ENCODE measurements at regions of chr2 and their contacts with region 1.

Region 1: DNA sequence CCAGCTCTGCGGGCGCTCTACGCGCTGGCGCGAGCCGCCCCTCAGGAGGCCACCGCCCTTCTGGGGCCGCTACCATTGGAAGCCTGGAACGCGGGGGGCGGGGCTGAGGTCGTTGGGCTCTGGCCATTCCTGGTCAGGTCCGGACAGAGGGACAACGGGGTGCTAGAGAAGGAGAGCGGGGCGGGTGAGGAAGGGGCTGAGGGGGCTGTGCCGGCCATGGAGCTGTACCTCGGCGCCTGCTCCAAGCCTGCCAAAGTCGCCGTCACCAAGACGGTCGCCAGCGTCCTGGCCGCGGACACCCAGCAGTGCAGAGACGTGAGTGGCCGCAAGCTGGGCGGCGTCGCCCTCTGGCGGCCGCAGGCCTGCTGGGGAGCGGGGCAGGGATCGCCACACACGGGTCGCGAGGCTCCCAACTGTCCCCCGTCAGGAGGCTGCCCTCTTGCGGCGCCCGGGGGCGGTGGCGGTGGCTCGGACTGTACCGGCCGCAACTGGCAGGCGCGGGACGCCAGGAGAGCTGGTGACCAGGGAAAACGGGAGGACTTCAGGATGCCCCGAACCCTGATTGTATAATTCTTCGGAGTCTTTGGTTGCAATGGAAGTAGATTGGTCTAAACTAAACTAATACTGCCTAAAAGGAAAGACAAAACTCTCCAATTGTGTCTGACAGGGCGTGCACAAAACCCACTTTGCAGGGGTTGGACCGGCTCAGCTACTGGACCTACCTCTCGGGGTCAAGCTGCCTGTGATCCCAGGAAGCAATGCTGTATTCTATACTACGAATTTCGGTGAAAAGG is at the start of gene FSIP2:
- DNase-seq: peak; percentile 84
- H3K4me3 ChIP-seq: peak within 1 kb of the TSS; percentile 55
- H3K27ac ChIP-seq: no peak within 1 kb of the TSS
- H3K4me1 ChIP-seq: no peaks in the 10 kb centered on the region
- H3K27me3 ChIP-seq: no peaks in the 10 kb centered on the region
- CTCF ChIP-seq: peak; percentile 98
- total RNA-seq, gene FSIP2: 0.15 and 0.21 TPM in 2 replicates

Region 2: GRCh38 chr2:184599872-184600222 is 1139.0 kb before region 1 on chr2:
- CTCF ChIA-PET with region 1: no interaction called
- POLR2A ChIA-PET with region 1: no interaction called
- intact Hi-C with region 1: loop called (anchors 10 kb)
- DNase-seq: no peak
- H3K4me3 ChIP-seq: peak overlapping the region; percentile 74
- H3K27ac ChIP-seq: peak overlapping the region; percentile 37
- H3K4me1 ChIP-seq: peaks cover 34% of the 10 kb centered on the region
- H3K27me3 ChIP-seq: no peaks in the 10 kb centered on the region
- CTCF ChIP-seq: no peak

Region 3: DNA sequence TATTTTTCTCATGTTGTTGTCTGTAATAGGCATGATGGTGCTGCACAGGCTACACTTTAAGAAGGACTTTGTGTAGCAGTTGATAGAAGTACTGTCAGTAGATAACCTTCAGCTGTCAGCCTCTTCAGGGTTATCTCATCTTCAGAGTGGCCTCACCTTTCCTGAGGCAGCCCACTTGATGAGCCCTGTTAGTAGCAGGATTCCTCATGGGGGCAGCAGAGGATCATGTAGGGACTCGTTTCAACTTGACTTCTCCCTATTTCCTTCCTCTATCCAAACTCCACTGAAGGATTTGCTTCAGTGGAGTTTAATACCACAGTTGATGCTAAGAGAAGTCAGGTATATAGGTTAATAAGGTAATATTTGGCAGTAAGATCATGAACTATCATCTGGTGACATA is 530.6 kb before region 1 on chr2:
- CTCF ChIA-PET with region 1: interaction called, 3 read pairs
- POLR2A ChIA-PET with region 1: no interaction called
- intact Hi-C with region 1: loop called (anchors 2 kb)
- DNase-seq: peak; percentile 62
- H3K4me3 ChIP-seq: no peak overlapping the region
- H3K27ac ChIP-seq: no peak overlapping the region
- H3K4me1 ChIP-seq: no peaks in the 10 kb centered on the region
- H3K27me3 ChIP-seq: no peaks in the 10 kb centered on the region
- CTCF ChIP-seq: peak; percentile 66

Region 4: DNA sequence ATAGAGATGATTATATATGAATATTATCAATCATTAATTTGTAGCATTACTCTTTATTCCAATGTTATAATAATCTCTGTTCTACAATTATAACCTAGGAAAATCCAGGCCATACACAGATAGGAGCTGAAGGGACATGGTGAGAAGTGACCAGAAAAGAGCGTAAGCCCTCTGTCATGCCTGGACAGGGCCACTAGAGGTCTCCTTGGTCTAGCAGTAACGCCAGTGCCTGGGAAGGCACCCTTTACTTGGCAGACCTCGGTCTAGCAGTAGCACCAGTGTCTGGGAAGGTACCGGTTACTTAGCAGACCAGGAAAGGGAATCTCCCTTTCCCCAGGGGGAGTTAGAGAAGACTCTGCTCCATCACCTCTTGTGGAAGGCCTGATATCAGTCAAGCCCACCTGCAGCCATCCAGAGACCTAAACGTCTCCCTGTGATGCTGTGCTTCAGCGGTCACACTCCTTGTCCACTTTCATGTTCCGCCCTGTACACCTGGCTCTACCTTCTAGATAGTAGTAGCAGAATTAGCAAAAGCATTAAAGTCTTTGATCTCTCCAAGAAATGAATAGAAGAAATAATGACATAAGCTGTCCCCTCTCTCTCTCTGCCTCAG is 447.7 kb before region 1 on chr2:
- CTCF ChIA-PET with region 1: interaction called, 4 read pairs
- POLR2A ChIA-PET with region 1: no interaction called
- intact Hi-C with region 1: loop called (anchors 2 kb)
- DNase-seq: peak; percentile 64
- H3K4me3 ChIP-seq: no peak overlapping the region
- H3K27ac ChIP-seq: no peak overlapping the region
- H3K4me1 ChIP-seq: no peaks in the 10 kb centered on the region
- H3K27me3 ChIP-seq: no peaks in the 10 kb centered on the region
- CTCF ChIP-seq: peak; percentile 74

Region 5: GRCh38 chr2:185522472-185522871 is 216.4 kb before region 1 on chr2:
- CTCF ChIA-PET with region 1: no interaction called
- POLR2A ChIA-PET with region 1: no interaction called
- intact Hi-C with region 1: loop called (anchors 5 kb)
- DNase-seq: peak; percentile 9
- H3K4me3 ChIP-seq: no peak overlapping the region
- H3K27ac ChIP-seq: no peak overlapping the region
- H3K4me1 ChIP-seq: no peaks in the 10 kb centered on the region
- H3K27me3 ChIP-seq: no peaks in the 10 kb centered on the region
- CTCF ChIP-seq: peak; percentile 36; the same call in 1 of the 2 replicates

Region 6: GRCh38 chr2:186256540-186256939 is 517.7 kb after region 1 on chr2:
- CTCF ChIA-PET with region 1: no interaction called
- POLR2A ChIA-PET with region 1: no interaction called
- intact Hi-C with region 1: loop called (anchors 5 kb)
- DNase-seq: peak; percentile 66
- H3K4me3 ChIP-seq: no peak overlapping the region
- H3K27ac ChIP-seq: no peak overlapping the region
- H3K4me1 ChIP-seq: no peaks in the 10 kb centered on the region
- H3K27me3 ChIP-seq: no peaks in the 10 kb centered on the region
- CTCF ChIP-seq: peak; percentile 69

Measured in A673 (cell line).